Caco-2 (cell line): ENCODE measurements at regions of chr18 and their contacts with region 1.

Region 1: DNA sequence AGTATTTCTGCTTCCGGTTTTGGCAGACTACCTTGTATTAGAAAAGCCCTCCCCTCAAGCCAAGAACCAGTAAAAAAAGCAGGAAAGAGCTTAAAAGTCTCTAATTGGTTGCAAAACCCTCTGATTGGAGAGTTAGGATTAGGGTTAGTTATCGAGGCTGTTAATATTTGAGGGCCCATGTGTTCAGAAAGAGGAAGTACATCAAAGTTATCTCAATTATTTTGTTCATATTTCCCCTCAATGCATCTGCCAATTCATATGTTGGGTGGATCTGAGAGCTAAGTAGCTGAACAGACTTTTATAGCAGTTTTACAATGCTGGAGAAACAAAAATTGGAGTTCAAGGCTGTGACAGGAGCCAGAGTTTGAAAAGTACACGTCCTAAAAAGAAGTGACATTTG is 43.1 kb upstream of the KLHL14 start:
- DNase-seq: no peak
- H3K4me3 ChIP-seq: no peak overlapping the region
- H3K4me3 Mint-ChIP-seq: no peak overlapping the region
- H3K27ac Mint-ChIP-seq: no peak overlapping the region
- H3K4me1 ChIP-seq: no peaks in the 10 kb centered on the region
- H3K4me1 Mint-ChIP-seq: no peaks in the 10 kb centered on the region
- H3K27me3 ChIP-seq: no peaks in the 10 kb centered on the region
- H3K27me3 Mint-ChIP-seq: no peaks in the 10 kb centered on the region
- CTCF ChIP-seq: no peak

Region 2: GRCh38 chr18:31244771-31245394 is 1571.0 kb before region 1 on chr18:
- CTCF ChIA-PET with region 1: no interaction called
- POLR2A ChIA-PET with region 1: no interaction called
- intact Hi-C with region 1: no loop called
- DNase-seq: no peak
- H3K4me3 ChIP-seq: no peak overlapping the region
- H3K4me3 Mint-ChIP-seq: no peak overlapping the region
- H3K27ac Mint-ChIP-seq: peak overlapping the region; percentile 39
- H3K4me1 ChIP-seq: peaks cover 48% of the 10 kb centered on the region
- H3K4me1 Mint-ChIP-seq: no peaks in the 10 kb centered on the region
- H3K27me3 ChIP-seq: no peaks in the 10 kb centered on the region
- H3K27me3 Mint-ChIP-seq: no peaks in the 10 kb centered on the region
- CTCF ChIP-seq: no peak

Region 3: GRCh38 chr18:32798209-32798960 is 17.5 kb before region 1 on chr18:
- CTCF ChIA-PET with region 1: no interaction called
- POLR2A ChIA-PET with region 1: no interaction called
- intact Hi-C with region 1: loop called (anchors 1 kb)
- DNase-seq: no peak
- H3K4me3 ChIP-seq: no peak overlapping the region
- H3K4me3 Mint-ChIP-seq: no peak overlapping the region
- H3K27ac Mint-ChIP-seq: no peak overlapping the region
- H3K4me1 ChIP-seq: no peaks in the 10 kb centered on the region
- H3K4me1 Mint-ChIP-seq: no peaks in the 10 kb centered on the region
- H3K27me3 ChIP-seq: no peaks in the 10 kb centered on the region
- H3K27me3 Mint-ChIP-seq: no peaks in the 10 kb centered on the region
- CTCF ChIP-seq: no peak